ENCODE measurements at regions of chr16 and their contacts with region 1.

Region 1: GRCh38 chr16:24253192-24253591 is 2.9 kb upstream of the CACNG3 start:
- DNase-seq: peak; percentile 10
- H3K4me3 ChIP-seq: no peak overlapping the region
- H3K27ac ChIP-seq: no peak overlapping the region
- H3K4me1 ChIP-seq: no peaks in the 10 kb centered on the region
- H3K27me3 ChIP-seq: peaks cover 53% of the 10 kb centered on the region
- CTCF ChIP-seq: peak; percentile 35 to 67 (median 49)
- EP300 ChIP-seq: no peak
- POLR2A ChIP-seq: no peak

Region 2: DNA sequence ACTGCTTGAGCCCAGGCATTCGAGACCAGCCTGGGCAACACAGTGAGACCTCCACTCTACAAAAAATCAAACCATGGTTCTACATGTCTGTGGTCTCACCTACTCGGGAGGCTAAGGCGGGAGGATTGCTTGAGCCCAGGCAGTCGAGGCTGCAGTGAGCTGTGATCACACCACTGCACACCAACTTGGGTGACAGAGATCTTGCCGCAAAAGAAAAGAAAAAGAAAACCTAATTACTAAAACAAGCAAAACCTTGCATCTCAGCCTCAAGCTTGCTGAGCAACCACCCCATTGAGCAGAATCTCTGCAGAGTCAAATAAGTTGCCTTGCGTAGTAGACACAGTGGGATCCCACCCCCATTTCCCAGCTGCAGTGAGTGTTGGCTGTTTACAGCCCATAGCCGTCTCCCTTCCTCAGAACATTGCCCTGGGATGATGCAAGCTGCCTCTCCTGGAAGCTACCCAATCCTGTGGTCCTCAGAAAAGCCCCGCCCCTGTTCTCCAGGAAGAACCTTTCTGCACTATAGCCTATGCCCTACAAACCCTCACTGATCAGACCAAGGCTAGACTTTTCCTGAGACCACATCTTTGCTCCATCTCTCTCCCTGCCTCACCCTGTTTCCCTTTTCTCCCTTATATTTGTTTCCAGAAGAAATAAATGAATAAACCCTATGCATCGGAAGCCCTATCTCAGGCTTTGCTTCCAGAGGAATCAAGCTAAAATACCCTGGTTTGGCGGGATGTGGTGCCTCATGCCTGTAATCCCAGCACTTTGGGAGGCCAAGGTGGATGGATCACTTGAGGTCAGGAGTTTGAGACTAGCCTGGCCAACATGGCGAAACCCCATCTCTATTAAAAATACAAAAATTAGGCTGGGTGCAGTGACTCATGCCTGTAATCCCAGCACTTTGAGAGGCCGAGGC is 523.4 kb before region 1 on chr16:
- in situ Hi-C with region 1: loop called in 1 of 4 experiments (anchors 25 kb)
- intact Hi-C with region 1: no loop called
- DNase-seq: peak; percentile 87
- H3K4me3 ChIP-seq: no peak overlapping the region
- H3K27ac ChIP-seq: peak overlapping the region; percentile 53 to 71 (median 60)
- H3K4me1 ChIP-seq: peaks cover 0 to 16% (median 3%) of the 10 kb centered on the region in 4 donors
- H3K27me3 ChIP-seq: no peaks in the 10 kb centered on the region
- CTCF ChIP-seq: no peak
- EP300 ChIP-seq: no peak
- POLR2A ChIP-seq: no peak

Region 3: DNA sequence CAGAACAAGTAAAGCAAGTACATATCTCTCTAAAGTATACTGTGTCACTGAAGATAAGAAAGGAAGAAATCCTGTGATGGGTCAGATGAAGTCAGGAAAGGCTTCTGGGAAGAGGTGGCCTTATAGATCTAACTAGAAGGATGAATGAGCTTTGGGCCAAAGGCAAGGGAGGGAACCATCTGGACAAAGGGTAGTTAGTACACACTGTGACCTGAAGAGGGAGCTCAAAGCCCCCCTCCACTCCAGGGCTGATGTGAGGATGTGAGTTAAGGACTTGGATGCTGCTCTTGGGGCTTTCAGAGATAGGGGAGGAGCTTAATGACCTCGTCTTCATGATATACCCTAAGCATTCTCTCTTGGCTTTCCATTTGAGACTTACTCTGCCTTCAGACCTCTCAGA is 182.3 kb before region 1 on chr16:
- in situ Hi-C with region 1: loop called in 1 of 4 experiments (anchors 25 kb)
- intact Hi-C with region 1: no loop called
- DNase-seq: no peak
- H3K4me3 ChIP-seq: no peak overlapping the region
- H3K27ac ChIP-seq: no peak overlapping the region
- H3K4me1 ChIP-seq: no peaks in the 10 kb centered on the region
- H3K27me3 ChIP-seq: no peaks in the 10 kb centered on the region
- CTCF ChIP-seq: peak in 2 of 5 experiments; percentile 30 to 41
- EP300 ChIP-seq: no peak
- POLR2A ChIP-seq: no peak

Region 4: GRCh38 chr16:24151482-24151939 is 101.7 kb before region 1 on chr16:
- in situ Hi-C with region 1: no loop called
- intact Hi-C with region 1: no loop called
- DNase-seq: no peak
- H3K4me3 ChIP-seq: no peak overlapping the region
- H3K27ac ChIP-seq: no peak overlapping the region
- H3K4me1 ChIP-seq: no peaks in the 10 kb centered on the region
- H3K27me3 ChIP-seq: no peaks in the 10 kb centered on the region
- CTCF ChIP-seq: no peak
- EP300 ChIP-seq: no peak
- POLR2A ChIP-seq: no peak